Activated naive CD4-positive, alpha-beta T cell treated with anti-CD3 and anti-CD28 coated beads for 36 hours (primary cell): ENCODE measurements at regions of chr11 and their contacts with region 1.

Region 1: DNA sequence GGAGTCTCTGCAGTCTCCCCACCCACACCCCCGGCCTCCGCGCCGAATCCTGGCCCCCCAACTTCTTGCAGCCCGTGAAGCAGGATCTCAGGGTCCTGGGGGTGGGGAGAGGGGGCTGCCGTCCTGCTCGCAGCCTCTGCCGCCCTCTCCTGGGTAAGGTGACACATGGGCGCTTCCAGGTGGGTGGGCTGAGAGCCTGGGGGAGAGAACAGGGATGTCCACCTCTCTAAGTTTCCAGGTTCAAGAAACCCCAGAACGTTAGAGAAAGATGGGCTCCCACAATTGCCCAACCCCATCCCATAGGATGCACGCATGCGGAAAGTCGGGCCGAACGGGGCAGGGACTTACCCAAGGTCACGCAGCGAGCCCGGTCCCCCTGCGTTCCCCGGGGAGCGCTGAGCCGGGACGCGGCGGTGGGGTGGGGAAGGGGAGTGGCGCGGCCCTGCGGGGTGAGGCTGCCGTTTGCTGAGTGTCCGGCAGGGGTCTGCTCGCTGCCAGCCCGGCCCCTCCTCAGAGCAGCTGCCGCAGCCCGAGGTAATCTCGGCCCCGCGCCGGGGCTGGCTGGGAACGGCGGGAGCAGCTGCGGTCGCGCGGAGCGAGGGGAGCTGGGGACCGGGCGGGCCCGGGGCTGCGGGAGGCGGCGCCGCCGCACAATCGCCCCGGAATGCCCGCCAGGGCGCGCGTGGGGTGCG is 705 bp upstream of the CAPN1 start:
- DNase-seq: peak; percentile 59
- H3K4me3 Mint-ChIP-seq: peak overlapping the region; percentile 80
- H3K27ac Mint-ChIP-seq: no peak overlapping the region
- H3K4me1 Mint-ChIP-seq: peaks cover 15% of the 10 kb centered on the region
- H3K27me3 Mint-ChIP-seq: no peaks in the 10 kb centered on the region

Region 2: GRCh38 chr11:65111744-65112414 is 69.1 kb before region 1 on chr11 and contains the start of gene TM7SF2:
- CTCF ChIA-PET with region 1: interaction called, 15 read pairs
- intact Hi-C with region 1: loop called (anchors 1 kb)
- DNase-seq: peak; percentile 96
- H3K4me3 Mint-ChIP-seq: peak within 1 kb of the TSS; percentile 80
- H3K27ac Mint-ChIP-seq: peak within 1 kb of the TSS; percentile 72
- H3K4me1 Mint-ChIP-seq: peaks cover 51% of the 10 kb centered on the region
- H3K27me3 Mint-ChIP-seq: no peaks in the 10 kb centered on the region
- total RNA-seq, gene TM7SF2: 10.9 to 11.9 TPM

Region 3: DNA sequence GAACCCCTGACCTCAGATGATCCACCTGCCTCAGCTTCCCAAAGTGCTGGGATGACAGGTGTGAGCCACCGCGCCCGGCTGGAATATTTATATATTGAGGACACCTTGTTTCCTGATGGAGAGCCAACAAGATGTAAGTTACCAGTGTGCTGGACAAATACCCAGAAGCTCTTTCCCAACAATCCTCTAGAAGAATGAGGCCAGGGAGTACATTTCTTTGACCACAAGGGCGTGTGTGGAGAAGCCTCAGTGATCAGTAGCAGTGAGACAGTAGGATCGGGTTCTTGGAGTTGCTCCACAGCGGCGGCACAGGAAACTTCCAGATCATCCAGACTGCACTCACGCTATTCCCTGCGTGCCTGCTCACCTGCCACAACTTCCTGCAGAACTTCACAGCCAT is 70.5 kb after region 1 on chr11:
- CTCF ChIA-PET with region 1: no interaction called
- intact Hi-C with region 1: loop called (anchors 10 kb)
- DNase-seq: no peak
- H3K4me3 Mint-ChIP-seq: no peak overlapping the region
- H3K27ac Mint-ChIP-seq: no peak overlapping the region
- H3K4me1 Mint-ChIP-seq: no peaks in the 10 kb centered on the region
- H3K27me3 Mint-ChIP-seq: no peaks in the 10 kb centered on the region